ENCODE measurements at regions of chr10 and their contacts with region 1.

Region 1: DNA sequence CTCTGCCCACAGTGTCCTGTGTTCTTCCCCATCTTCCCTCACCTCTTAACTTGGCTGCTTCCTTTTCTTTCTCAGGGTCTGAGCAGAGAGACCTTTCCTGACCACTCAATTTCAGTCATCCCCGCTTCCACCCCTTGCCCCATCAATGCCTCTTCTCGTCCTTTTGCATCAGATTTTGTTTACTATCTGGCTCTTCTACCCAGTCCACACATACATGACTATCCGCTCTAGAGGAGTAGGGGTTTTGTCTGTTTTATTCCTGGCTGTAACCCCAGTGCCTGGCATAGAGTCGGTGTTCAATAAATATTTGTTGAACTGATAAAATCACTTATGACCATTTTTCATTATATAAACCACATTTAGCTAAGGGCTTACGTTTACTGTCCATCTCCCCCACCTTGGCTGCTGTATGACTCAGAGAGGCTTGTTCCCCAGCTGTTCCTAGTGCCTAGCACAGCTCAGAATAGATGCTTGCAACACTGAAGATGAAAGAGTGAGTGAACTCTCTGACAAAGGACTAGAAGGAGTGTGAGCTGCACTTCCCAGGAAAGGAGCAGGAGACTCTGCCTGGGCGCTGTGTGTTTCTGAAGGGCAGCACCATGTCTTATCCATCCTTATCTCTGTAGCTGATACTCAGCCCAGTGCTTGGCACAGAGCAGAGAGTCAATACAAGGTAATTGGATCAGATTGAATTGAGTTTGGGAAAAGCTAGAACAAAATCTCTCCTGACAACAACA is 21.9 kb downstream of the ARID5B start:
- DNase-seq: peak; percentile 49
- H3K4me3 Mint-ChIP-seq: no peak overlapping the region
- H3K27ac Mint-ChIP-seq: no peak overlapping the region
- H3K4me1 Mint-ChIP-seq: peaks cover 10% of the 10 kb centered on the region
- H3K27me3 Mint-ChIP-seq: no peaks in the 10 kb centered on the region
- CTCF ChIP-seq: no peak

Region 2: GRCh38 chr10:61888744-61889143 is 34.6 kb before region 1 on chr10:
- CTCF ChIA-PET with region 1: no interaction called
- POLR2A ChIA-PET with region 1: no interaction called
- intact Hi-C with region 1: no loop called
- DNase-seq: no peak
- H3K4me3 Mint-ChIP-seq: no peak overlapping the region
- H3K27ac Mint-ChIP-seq: no peak overlapping the region
- H3K4me1 Mint-ChIP-seq: peaks cover 17% of the 10 kb centered on the region
- H3K27me3 Mint-ChIP-seq: no peaks in the 10 kb centered on the region
- CTCF ChIP-seq: no peak

Region 3: GRCh38 chr10:61937631-61938351 is 14.4 kb after region 1 on chr10:
- CTCF ChIA-PET with region 1: interaction called, 6 read pairs
- POLR2A ChIA-PET with region 1: interaction called, 12 read pairs
- intact Hi-C with region 1: no loop called
- DNase-seq: no peak
- H3K4me3 Mint-ChIP-seq: no peak overlapping the region
- H3K27ac Mint-ChIP-seq: peak overlapping the region; percentile 93
- H3K4me1 Mint-ChIP-seq: peaks cover 27% of the 10 kb centered on the region
- H3K27me3 Mint-ChIP-seq: no peaks in the 10 kb centered on the region
- CTCF ChIP-seq: no peak